ENCODE measurements at regions of chr3 and their contacts with region 1.

Region 1: DNA sequence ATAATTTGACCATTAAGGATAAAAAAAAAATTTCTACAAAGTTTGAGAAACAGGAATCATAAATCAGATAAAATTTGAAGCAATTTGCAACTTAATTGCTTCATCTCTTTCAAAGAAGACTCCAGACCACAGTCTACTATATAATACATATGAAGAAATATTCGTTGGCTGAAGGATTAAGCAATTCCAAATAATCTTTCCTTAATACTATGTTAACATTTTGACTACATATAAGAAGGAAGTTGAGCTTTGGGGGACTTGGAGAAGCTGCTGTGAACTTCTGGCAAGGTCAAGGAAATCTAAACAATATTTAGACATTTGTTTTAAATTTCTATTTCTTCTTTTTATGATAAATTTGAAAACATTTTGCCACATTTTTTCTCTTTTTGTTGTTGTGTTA is 13.5 kb upstream of the GABRR3 start:
- DNase-seq: no peak
- H3K4me3 ChIP-seq: no peak overlapping the region
- H3K27ac ChIP-seq: no peak overlapping the region
- H3K4me1 ChIP-seq: no peaks in the 10 kb centered on the region
- H3K27me3 ChIP-seq: no peaks in the 10 kb centered on the region
- CTCF ChIP-seq: no peak
- EP300 ChIP-seq: no peak
- POLR2A ChIP-seq: no peak
- RAD21 ChIP-seq: no peak

Region 2: GRCh38 chr3:97647441-97647982 is 401.1 kb before region 1 on chr3:
- CTCF ChIA-PET with region 1: no interaction called
- POLR2A ChIA-PET with region 1: no interaction called
- DNase-seq: no peak
- H3K4me3 ChIP-seq: no peak overlapping the region
- H3K27ac ChIP-seq: no peak overlapping the region
- H3K4me1 ChIP-seq: no peaks in the 10 kb centered on the region
- H3K27me3 ChIP-seq: no peaks in the 10 kb centered on the region
- CTCF ChIP-seq: no peak
- EP300 ChIP-seq: no peak
- POLR2A ChIP-seq: no peak
- RAD21 ChIP-seq: no peak

Region 3: DNA sequence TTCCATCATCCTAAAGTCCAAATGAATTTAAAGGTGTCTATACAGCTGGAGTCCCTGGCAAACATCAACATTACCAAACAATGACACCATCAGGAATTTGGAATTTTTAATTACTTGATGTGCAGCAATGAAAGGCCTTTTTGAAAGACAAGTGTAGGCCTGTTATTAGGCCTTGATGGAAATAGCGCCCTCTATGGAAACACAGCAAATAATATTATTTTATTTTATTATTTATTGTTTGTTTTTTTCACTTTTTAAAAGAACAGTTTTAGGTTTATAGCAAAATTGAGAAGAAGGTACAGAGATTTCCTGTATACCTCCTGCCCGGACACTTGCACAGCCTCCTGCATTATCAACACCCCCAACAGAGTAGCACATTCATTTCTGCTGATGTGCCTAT is 20.2 kb after region 1 on chr3:
- CTCF ChIA-PET with region 1: interaction called, 11 read pairs
- POLR2A ChIA-PET with region 1: interaction called, 3 read pairs
- DNase-seq: no peak
- H3K4me3 ChIP-seq: no peak overlapping the region
- H3K27ac ChIP-seq: no peak overlapping the region
- H3K4me1 ChIP-seq: no peaks in the 10 kb centered on the region
- H3K27me3 ChIP-seq: no peaks in the 10 kb centered on the region
- CTCF ChIP-seq: no peak; a peak in 1 of 4 replicates
- EP300 ChIP-seq: no peak
- POLR2A ChIP-seq: no peak
- RAD21 ChIP-seq: no peak

Region 4: DNA sequence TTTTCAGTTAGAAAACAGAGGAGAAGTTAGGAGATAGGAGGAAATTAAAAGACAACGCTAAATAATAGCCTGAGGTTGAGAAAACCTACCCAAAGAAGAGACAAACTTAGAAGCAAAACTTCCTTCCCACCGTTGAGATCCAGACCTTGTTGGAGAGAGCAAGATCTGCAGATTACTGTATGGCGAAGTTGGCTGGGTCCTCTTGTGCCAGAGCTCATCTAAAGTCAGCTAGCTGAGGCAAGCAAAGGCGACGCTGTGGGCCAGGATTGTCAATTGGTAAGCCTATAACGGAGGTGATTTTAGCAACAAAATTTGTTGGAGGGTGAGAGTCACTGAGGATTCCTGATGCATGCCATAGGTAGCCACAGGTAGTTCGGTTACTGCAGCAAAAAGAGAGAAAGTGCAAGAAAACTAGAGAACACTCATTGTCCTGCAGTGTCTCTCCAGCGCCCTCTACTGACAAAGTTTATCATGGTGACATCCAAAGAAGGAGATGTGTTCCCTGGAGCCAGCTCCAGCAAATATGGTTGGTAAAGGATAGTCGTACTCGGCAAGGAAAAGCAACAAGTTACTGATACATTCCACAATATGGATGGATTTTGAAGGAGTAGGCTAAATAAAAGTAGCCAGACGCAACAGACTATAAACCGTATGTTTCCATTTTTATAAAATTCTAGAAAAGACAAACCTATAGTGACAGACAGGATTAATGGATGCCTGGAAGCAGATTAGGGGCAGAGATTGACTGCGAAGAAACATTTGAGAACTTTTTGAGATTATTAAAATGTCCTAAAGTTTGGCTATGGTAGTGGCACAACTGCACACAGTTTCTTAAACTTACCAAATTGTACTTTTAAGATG is 295.3 kb after region 1 on chr3:
- CTCF ChIA-PET with region 1: interaction called, 12 read pairs
- POLR2A ChIA-PET with region 1: no interaction called
- DNase-seq: peak in 1 of 2 experiments; percentile 76
- H3K4me3 ChIP-seq: no peak overlapping the region
- H3K27ac ChIP-seq: no peak overlapping the region
- H3K4me1 ChIP-seq: no peaks in the 10 kb centered on the region
- H3K27me3 ChIP-seq: no peaks in the 10 kb centered on the region
- CTCF ChIP-seq: peak in 2 of 3 experiments; percentile 80 to 90; a peak in 3 of 4 replicates
- EP300 ChIP-seq: no peak
- POLR2A ChIP-seq: no peak
- RAD21 ChIP-seq: peak; percentile 86 to 89

Measured in H1 (cell line).